Right ventricle myocardium superior (tissue), 1 donor: ENCODE measurements at regions of chr15 and their contacts with region 1.

Region 1: GRCh38 chr15:65095011-65095746 is 18.6 kb downstream of the KBTBD13 start:
- DNase-seq: no peak
- ATAC-seq: no peak

Region 2: GRCh38 chr15:65054333-65055200 is 40.6 kb before region 1 on chr15:
- intact Hi-C with region 1: loop called (anchors 5 kb)
- DNase-seq: peak; percentile 84
- ATAC-seq: peak; percentile 86

Region 3: DNA sequence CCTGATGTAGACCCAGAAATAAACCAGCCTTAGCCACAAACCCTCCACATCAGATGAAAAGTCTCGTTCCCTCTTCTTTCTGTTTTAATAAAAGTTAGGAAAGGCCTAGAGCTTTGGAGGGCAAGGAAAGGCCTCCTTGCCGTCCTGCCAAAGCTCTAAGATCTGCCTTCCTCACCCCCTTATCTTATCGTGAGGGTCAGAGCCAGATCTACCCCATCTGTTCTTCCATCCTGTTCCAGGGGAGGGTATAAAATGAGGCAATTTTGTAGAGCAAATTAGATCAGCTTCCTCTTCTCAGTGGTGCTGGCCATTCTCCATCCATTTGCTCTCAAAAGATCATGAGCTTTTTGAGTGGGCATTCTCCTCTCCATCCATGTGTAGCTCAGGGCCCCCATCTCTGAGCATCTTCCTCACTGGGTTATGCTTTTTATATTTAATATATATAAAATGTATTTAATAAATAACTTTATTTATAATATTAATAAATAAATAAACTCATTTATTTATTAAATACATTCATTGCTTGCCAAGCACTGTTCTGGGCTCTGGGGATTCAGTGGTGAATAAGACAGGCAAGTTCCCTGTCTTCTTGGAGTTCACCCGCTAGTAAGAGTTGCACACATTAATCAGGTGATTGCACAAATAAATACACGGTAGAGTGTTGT is 524.6 kb after region 1 on chr15:
- intact Hi-C with region 1: no loop called
- DNase-seq: no peak
- ATAC-seq: no peak